Esophagus muscularis mucosa (tissue), 4 donors: ENCODE measurements at regions of chr10 and their contacts with region 1.

Region 1: DNA sequence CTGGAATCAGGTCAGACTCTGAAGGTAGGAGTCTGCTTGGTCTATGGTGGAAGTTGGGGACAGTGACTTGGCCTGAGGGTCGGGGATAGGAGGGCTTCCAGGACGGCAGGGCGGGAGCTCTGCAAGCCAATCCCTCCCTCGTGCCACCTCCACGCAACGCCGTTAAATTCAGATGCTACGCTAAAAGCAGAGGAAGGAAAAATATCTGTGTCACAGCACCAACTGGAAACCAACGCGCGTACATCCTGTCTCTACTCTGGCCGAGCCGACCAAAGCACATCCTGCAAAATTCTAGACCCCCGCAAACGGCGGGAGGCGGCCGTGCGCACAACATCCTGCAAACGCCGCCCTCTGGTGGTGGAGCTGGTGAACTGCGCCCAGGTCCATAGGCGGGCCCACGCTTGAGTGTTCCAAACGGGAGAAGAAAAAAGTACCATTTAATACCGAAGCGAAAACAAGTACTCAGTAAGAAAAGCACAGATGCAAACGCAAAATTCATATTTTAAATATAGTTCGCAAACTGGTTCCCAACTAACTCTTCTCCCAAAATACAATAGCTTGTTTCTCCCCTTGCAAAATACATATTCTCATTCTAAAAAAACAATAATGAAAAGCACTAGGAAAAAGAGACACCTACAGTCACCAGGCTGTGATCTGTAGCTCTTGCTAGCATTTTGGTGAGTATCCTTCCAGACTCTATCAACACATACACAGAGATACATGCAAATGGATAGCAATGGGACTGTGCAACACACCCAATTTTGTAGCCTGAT is 45.7 kb upstream of the HSPA12A start:
- DNase-seq: no peak
- H3K4me3 ChIP-seq: peak overlapping the region; percentile 29 to 48 (median 36)
- H3K27ac ChIP-seq: no peak overlapping the region
- H3K4me1 ChIP-seq: peaks cover 6 to 10% (median 8%) of the 10 kb centered on the region in 4 donors
- H3K27me3 ChIP-seq: peaks cover 0 to 8% (median 0%) of the 10 kb centered on the region in 4 donors
- CTCF ChIP-seq: peak; percentile 95 to 100 (median 100)
- EP300 ChIP-seq: no peak
- POLR2A ChIP-seq: no peak

Region 2: GRCh38 chr10:116627386-116627933 is 160.6 kb before region 1 on chr10:
- intact Hi-C with region 1: loop called (anchors 5 kb)
- DNase-seq: peak; percentile 85
- H3K4me3 ChIP-seq: peak overlapping the region; percentile 30 to 52 (median 38)
- H3K27ac ChIP-seq: no peak overlapping the region
- H3K4me1 ChIP-seq: peaks cover 4 to 9% (median 8%) of the 10 kb centered on the region in 4 donors
- H3K27me3 ChIP-seq: peaks cover 0 to 35% (median 4%) of the 10 kb centered on the region in 4 donors
- CTCF ChIP-seq: peak in 2 of 3 experiments; percentile 21 to 51
- EP300 ChIP-seq: no peak
- POLR2A ChIP-seq: no peak

Region 3: GRCh38 chr10:116665541-116666125 is 122.4 kb before region 1 on chr10:
- intact Hi-C with region 1: no loop called
- DNase-seq: no peak
- H3K4me3 ChIP-seq: peak overlapping the region; percentile 32 to 46 (median 36)
- H3K27ac ChIP-seq: peak overlapping the region; percentile 10 to 62 (median 54)
- H3K4me1 ChIP-seq: peaks cover 0 to 23% (median 21%) of the 10 kb centered on the region in 4 donors
- H3K27me3 ChIP-seq: peaks cover 0 to 11% (median 0%) of the 10 kb centered on the region in 4 donors
- CTCF ChIP-seq: no peak
- EP300 ChIP-seq: no peak
- POLR2A ChIP-seq: no peak

Region 4: DNA sequence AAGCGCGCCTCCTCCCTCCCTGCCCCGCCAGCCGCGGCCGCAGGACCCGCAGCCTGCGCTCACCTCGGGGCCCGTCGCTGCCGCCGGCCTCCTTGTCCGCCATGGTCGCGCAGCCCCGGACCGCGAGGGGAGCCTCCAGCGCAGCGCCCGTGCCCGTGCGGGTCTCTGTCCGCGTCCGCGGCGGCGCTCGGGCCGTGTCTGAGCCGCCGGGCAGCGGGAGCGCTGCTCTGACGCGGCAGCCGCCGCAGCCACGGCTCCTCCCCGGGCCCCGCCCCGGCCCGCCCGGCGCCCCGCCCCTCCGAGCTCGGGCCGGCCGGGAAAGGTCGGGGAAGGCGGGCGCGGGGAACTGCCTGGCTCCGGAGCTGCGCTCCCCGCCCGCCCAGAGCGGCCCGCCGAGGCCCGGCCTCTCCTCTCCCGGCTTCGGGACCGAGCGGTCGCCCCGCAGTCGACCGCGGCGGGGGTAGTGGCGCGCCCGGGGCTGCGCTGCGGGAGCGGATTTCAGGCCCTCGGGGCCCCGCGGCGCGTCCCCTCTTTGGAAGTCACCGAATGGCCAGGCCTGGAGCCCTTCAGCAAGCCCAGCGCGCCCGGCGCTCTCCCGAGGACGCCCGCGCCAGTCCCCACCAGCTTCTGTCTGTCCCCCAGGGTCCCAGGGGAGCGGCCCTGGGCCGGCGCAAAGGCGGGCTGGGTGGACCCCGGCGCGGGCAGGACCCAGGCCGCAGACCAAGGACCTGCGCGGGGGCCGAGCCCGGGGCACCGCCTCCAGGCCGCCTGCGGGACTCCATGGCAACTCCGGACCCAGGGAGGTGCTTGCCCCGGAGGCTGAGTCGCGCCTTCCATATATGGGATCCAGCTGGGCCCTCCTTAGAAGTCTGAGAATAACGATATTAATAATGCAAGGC is 45.5 kb before region 1 on chr10 and contains the start of gene HSPA12A:
- intact Hi-C with region 1: loop called (anchors 5 kb)
- DNase-seq: peak; percentile 94
- H3K4me3 ChIP-seq: peak within 1 kb of the TSS; percentile 93 to 98 (median 96)
- H3K27ac ChIP-seq: peak within 1 kb of the TSS; percentile 96 to 99 (median 98)
- H3K4me1 ChIP-seq: peaks cover 5 to 46% (median 34%) of the 10 kb centered on the region in 4 donors
- H3K27me3 ChIP-seq: peaks cover 0 to 6% (median 0%) of the 10 kb centered on the region in 4 donors
- CTCF ChIP-seq: peak in 1 of 3 experiments; percentile 0
- EP300 ChIP-seq: no peak
- POLR2A ChIP-seq: peak; percentile 56
- total RNA-seq, gene HSPA12A: 16.4 to 24.5 (median 22.2) TPM